ENCODE measurements at regions of chr9 and their contacts with region 1.

Region 1: DNA sequence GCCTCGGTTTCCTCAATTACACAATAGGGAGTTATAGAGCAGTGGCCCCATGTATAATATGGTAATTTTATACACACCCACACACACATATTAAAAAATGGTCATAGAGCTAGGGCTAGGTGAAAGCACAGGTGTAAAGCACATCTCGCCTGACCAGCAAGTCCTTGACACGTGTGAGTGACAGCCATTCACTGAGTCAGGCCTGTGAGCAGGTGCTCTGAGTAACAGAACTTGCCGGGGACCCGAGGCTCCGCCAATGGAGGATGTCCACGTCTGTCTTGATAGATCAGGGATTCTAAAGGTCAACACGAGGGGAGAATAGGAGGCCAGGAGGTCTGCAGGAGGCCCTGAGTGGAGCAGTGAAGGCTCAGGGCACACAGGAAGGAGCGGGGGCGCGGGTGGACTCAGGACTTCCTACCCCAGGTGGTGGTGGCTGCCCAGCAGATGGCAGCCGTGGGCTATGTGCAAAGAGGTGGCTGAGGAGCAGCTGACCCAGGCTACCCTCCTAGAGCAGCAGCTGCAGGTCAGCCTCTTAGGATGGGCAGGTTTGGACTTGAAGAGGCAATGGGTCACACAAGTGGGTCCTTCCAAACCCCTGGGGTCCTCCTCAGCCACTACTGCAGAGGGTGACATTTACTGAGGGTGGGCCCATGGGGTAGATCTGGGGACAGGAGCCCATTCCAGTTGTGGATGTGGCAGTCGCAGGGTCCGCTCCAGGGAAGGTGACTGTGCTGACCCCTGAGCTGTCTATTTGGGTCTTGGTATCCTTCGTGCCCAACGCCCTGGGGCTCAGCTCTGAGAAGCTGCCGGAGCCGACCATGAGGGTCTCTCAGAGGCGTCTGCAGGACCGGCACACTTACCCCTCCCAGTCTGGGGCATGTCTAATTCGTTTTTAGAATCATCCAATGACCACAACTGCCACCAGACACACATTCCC is 45.9 kb downstream of the PRRT1B start:
- DNase-seq: peak; percentile 92
- H3K27ac ChIP-seq: peak overlapping the region; percentile 62
- CTCF ChIP-seq: peak; percentile 99

Region 2: GRCh38 chr9:130088051-130088450 is 1503.1 kb before region 1 on chr9:
- CTCF ChIA-PET with region 1: no interaction called
- POLR2A ChIA-PET with region 1: no interaction called
- DNase-seq: no peak
- H3K27ac ChIP-seq: no peak overlapping the region
- CTCF ChIP-seq: no peak

Region 3: DNA sequence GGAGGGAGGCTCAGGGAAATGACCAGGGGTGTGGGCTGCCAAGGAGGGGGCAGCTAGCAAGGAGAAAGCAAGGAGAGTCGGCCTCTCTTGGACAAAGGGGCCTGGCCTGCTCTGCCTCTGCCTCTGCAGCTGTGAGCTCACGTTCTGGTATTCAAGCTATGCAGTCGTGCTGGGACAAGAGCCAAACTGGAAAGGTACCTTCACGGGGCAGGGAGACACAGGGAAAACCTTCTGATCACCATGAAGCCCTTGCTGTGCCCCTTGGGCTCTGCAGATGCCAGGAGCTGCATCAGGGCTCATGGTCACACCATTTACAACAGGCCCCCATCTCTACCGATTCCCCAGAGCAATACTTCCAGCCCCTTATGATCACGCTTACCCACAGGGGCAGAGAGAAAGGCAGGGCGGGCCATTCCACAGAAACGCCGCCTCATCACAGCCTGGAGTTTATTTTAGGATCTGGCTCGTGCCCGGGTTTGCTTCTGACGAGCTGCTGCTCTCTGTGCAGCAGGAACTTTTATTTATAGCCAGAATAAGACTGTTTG is 17.4 kb after region 1 on chr9:
- CTCF ChIA-PET with region 1: interaction called, 12 read pairs
- POLR2A ChIA-PET with region 1: interaction called, 3 read pairs
- DNase-seq: peak; percentile 98
- H3K27ac ChIP-seq: peak overlapping the region; percentile 95
- CTCF ChIP-seq: no peak

Region 4: GRCh38 chr9:131678499-131679111 is 87.4 kb after region 1 on chr9:
- CTCF ChIA-PET with region 1: interaction called, 13 read pairs
- POLR2A ChIA-PET with region 1: no interaction called
- DNase-seq: peak; percentile 100
- H3K27ac ChIP-seq: peak overlapping the region; percentile 94
- CTCF ChIP-seq: no peak

Region 5: GRCh38 chr9:131739980-131740648 is 148.9 kb after region 1 on chr9 and contains the start of gene RAPGEF1:
- CTCF ChIA-PET with region 1: interaction called, 40 read pairs
- POLR2A ChIA-PET with region 1: no interaction called
- DNase-seq: peak; percentile 84
- H3K27ac ChIP-seq: peak within 1 kb of the TSS; percentile 79
- CTCF ChIP-seq: peak; percentile 99

Region 6: DNA sequence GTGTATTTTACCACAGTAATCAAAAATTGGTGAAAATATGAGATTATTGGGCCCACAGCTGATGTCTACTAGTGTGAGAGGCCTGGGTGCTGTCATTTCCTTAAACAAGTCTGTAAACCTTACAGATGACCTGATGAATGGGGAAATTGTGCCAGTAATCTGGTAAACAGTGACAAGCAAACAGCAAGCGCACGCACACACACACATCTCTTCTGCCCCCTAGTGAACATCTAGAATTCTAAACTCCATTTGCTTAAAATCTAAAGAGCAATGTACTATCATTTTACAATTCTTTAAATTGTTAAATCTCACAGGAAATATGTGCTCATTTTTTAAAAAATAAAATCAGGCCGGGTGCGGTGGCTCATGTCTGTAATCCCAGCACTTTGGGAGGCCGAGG is 156.2 kb after region 1 on chr9:
- CTCF ChIA-PET with region 1: interaction called, 15 read pairs
- POLR2A ChIA-PET with region 1: interaction called, 3 read pairs
- DNase-seq: no peak
- H3K27ac ChIP-seq: no peak overlapping the region
- CTCF ChIP-seq: peak; percentile 80

Region 7: DNA sequence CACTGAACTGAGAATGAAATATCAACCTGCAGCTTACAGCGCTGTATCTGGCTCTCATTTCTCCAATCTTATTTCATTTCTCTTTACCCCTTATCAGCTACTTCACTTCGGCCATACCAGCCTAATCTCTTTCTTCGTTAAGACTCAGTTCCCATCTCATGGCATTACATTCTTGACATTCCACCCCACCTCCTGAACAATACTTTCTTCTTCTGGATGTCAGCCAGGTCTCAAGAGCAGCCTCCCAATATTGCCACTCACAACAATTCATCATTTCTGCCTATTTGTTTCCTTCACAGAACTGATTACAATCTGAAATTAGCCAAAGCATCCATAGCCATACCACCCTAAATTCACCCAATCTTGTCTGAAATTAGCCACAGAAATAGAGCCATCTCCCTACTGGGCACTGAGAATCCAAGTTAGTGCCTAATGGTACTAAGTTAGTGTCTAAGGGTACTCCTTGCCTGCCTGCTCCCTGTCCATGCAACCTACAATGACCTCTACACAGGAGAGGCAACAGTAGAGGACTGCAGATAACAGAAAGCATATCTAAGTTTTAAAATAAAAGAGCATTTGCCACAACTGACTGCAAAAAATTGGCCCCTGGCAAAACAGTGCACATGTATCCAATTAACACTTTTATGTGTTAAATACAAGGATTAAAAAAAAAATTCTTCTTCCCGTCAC is 728.4 kb after region 1 on chr9:
- CTCF ChIA-PET with region 1: no interaction called
- POLR2A ChIA-PET with region 1: no interaction called
- DNase-seq: no peak
- H3K27ac ChIP-seq: no peak overlapping the region
- CTCF ChIP-seq: no peak

Measured in RWPE1 (cell line).